Naive thymus-derived CD4-positive, alpha-beta T cell (primary cell): ENCODE measurements at regions of chr5 and their contacts with region 1.

Region 1: DNA sequence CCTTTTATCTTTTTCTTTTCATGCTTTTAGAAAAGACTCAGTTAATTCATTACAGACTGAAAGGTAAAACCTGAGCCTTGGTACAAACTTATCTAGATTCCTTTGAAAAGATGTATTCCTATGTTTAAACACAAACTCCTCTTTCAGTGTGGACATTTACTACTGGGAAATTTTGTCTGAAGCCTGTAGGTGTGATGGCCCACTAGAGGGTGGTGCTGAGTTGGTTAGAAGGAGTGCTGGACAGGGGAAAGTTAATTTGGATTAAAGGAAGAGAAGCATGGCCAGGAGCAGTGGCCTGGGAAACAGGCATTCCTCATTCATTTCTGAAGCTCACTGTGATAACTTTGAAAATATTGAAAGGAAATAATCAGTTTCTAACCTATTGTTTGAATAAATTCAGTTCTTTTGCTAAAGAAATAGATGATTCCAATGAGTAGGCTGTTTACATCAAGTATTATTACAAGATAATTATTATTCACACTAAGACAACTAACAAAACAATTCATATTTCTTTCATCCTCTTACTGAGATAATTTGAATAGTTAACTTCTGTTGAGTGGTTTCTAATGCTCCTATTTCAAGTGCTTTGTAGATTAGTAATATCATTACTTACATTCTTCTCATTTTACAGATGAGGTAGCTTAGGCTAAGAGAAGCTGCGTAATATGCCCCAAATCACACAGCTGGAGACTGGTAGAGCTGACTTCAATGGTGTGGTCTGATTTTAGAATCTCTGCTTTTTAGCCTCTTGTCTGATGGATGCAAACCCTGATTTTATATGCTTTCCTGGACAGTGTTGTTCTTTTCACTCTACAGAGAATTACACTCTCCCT is 150.9 kb downstream of the ADGRV1 start:
- DNase-seq: no peak
- ATAC-seq: no peak
- H3K4me3 ChIP-seq: no peak overlapping the region
- H3K4me3 Mint-ChIP-seq: no peak overlapping the region
- H3K27ac ChIP-seq: no peak overlapping the region
- H3K27ac Mint-ChIP-seq: no peak overlapping the region
- H3K4me1 ChIP-seq: no peaks in the 10 kb centered on the region
- H3K4me1 Mint-ChIP-seq: no peaks in the 10 kb centered on the region
- H3K27me3 ChIP-seq: no peaks in the 10 kb centered on the region
- H3K27me3 Mint-ChIP-seq: peaks cover 2 to 21% (median 14%) of the 10 kb centered on the region in 5 donors

Region 2: DNA sequence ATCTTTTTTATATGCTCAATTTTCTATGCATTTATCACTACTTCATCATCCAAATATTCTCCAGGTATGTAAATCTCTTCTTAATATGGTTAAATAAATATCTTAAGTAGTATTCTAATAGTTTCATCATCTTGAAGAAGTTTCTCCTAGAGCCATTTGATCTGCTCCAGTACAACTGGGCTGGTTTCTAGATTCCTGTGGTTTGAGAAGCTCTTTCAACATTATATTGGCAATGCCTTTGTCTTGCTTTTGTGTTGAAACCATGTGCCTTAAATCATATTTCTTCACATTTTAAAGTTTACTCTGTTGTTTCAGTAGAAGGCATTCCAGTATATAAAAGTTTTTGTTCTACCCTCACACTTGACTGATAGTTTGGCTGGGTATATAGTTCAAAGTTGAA is 262.6 kb before region 1 on chr5:
- CTCF ChIA-PET with region 1: no interaction called
- POLR2A ChIA-PET with region 1: no interaction called
- intact Hi-C with region 1: loop called in 1 of 2 experiments (anchors 10 kb)
- DNase-seq: no peak
- ATAC-seq: no peak
- H3K4me3 ChIP-seq: no peak overlapping the region
- H3K4me3 Mint-ChIP-seq: no peak overlapping the region
- H3K27ac ChIP-seq: no peak overlapping the region
- H3K27ac Mint-ChIP-seq: no peak overlapping the region
- H3K4me1 ChIP-seq: no peaks in the 10 kb centered on the region
- H3K4me1 Mint-ChIP-seq: no peaks in the 10 kb centered on the region
- H3K27me3 ChIP-seq: no peaks in the 10 kb centered on the region
- H3K27me3 Mint-ChIP-seq: peaks cover 0 to 6% (median 0%) of the 10 kb centered on the region in 5 donors